ENCODE measurements at regions of chr4 and their contacts with region 1.

Region 1: DNA sequence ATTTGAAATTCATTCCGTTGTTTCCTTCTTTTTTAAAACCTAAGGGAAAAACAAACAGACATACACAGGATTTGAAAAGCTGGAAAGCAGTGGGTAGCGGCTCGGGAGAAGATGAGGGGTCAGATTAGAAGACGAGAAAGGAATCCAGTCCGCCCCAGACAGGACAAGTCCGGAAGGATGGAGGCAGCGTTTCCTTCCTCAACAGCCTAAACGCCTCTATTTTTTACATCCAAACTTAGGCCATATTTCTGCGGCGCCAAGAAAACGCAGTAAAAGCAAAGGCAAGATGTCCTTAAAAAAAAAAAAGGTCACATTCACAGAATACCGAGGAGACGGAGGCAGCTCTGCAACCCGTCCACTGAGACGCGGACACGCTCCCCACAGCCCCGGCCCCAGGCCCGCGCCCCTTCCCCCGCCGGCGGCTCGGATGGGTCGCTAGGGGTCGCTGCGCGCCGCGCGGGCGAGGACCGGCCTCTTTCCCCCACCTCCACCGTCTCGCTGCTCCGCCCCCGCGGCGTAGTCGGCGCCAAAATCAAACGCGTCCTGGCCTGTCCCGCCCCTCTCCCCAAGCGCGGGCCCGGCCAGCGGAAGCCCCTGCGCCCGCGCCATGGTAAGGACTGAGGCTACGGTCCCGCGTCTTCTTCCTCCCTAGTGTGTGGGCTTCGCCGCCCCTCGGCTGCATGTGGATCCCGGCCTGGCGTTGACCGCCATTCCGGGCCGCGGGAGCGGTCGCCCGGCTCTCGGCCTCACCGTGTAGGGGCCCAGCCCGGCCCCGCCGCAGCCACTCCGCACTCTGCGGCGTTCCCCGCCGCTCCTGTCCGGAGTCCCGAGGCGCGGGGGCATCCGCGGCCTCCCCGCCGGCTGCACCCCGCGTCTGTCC is at the start of gene MND1:
- DNase-seq: peak; percentile 77 to 93 (median 89)
- ATAC-seq: peak; percentile 93
- H3K4me3 ChIP-seq: peak within 1 kb of the TSS; percentile 49 to 66
- H3K4me3 Mint-ChIP-seq: peak within 1 kb of the TSS; percentile 87
- H3K27ac ChIP-seq: no peak within 1 kb of the TSS
- H3K27ac Mint-ChIP-seq: peak within 1 kb of the TSS; percentile 58
- H3K4me1 ChIP-seq: no peaks in the 10 kb centered on the region
- H3K4me1 Mint-ChIP-seq: peaks cover 6% of the 10 kb centered on the region
- H3K27me3 ChIP-seq: no peaks in the 10 kb centered on the region
- H3K27me3 Mint-ChIP-seq: no peaks in the 10 kb centered on the region
- CTCF ChIP-seq: peak; percentile 99
- total RNA-seq, gene MND1: not detected

Region 2: DNA sequence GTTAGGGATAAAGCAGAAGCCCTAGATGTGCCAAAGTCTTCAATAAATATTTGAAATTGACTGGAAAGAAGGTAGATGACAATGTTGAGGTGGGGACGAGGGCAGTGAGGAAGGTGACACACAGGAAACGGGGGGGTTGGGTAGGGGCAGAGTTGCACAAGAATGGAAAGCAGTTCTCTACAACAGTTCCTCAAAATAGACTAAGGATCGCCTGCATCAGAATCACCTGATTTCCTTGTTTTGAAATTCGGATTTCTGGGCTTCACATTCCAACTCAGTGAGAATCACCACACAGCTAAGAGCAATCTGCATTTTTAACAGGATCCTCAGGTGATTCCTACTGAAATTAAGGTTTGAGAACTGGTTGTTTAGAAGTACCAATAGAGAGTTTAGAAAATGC is 494.0 kb before region 1 on chr4:
- CTCF ChIA-PET with region 1: no interaction called
- POLR2A ChIA-PET with region 1: interaction called, 4 read pairs
- intact Hi-C with region 1: loop called in 1 of 2 experiments (anchors 5 kb)
- DNase-seq: peak in 7 of 9 experiments; percentile 18 to 57 (median 33)
- ATAC-seq: peak; percentile 69
- H3K4me3 ChIP-seq: no peak overlapping the region
- H3K4me3 Mint-ChIP-seq: no peak overlapping the region
- H3K27ac ChIP-seq: no peak overlapping the region
- H3K27ac Mint-ChIP-seq: no peak overlapping the region
- H3K4me1 ChIP-seq: peaks cover 4% of the 10 kb centered on the region
- H3K4me1 Mint-ChIP-seq: peaks cover 24% of the 10 kb centered on the region
- H3K27me3 ChIP-seq: no peaks in the 10 kb centered on the region
- H3K27me3 Mint-ChIP-seq: no peaks in the 10 kb centered on the region
- CTCF ChIP-seq: no peak

Region 3: GRCh38 chr4:153426207-153426885 is 82.0 kb after region 1 on chr4:
- CTCF ChIA-PET with region 1: interaction called, 18 read pairs
- POLR2A ChIA-PET with region 1: interaction called, 3 read pairs
- intact Hi-C with region 1: loop called in 1 of 2 experiments (anchors 5 kb)
- DNase-seq: peak in 4 of 9 experiments; percentile 9 to 78 (median 40)
- ATAC-seq: peak; percentile 78
- H3K4me3 ChIP-seq: peak overlapping the region in 1 of 2 experiments; percentile 33
- H3K4me3 Mint-ChIP-seq: peak overlapping the region; percentile 40
- H3K27ac ChIP-seq: peak overlapping the region; percentile 55 to 77
- H3K27ac Mint-ChIP-seq: peak overlapping the region; percentile 83
- H3K4me1 ChIP-seq: peaks cover 44% of the 10 kb centered on the region
- H3K4me1 Mint-ChIP-seq: peaks cover 53% of the 10 kb centered on the region
- H3K27me3 ChIP-seq: no peaks in the 10 kb centered on the region
- H3K27me3 Mint-ChIP-seq: no peaks in the 10 kb centered on the region
- CTCF ChIP-seq: no peak

Region 4: DNA sequence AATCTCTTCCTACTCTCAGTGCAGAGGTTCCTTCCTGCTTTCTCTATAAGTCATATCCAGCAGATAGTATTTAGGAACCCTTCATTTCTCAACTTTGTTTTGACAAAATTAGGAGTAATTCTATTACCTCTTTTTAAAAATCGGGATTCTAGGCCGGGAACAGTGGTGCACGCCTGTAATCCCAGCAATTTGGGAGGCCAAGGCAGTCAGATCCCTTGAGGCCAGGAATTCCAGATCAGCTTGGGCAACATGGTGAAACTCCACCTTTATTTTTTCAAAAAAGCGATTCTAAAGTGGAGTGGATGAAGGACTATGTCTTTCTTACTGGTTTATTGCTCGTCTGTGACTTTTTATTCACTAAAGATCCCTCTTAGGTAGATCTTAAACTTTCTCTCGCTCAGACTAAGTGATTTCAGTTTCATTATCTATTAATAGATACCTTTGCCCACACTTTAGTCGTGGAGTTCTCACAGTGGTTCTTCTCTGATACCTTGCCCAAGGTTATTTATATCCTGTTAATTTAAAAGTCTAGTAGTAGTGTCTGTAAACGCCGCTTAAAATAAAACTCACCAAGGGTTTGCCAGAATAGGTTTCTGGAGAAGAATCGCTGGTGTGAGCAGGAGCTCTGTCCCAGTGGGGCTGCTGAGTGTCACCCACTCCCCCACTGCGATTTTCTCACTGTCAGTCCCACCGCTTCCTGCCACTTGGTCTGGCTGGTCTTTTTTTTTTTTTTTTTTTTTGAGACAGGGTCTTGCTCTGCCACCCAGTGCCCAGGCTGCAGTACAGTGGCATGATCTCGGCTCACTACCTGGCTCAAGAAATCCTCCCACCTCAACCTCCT is 94.8 kb after region 1 on chr4:
- CTCF ChIA-PET with region 1: interaction called, 3 read pairs
- POLR2A ChIA-PET with region 1: no interaction called
- intact Hi-C with region 1: loop called in 1 of 2 experiments (anchors 2 kb)
- DNase-seq: peak in 7 of 9 experiments; percentile 18 to 75 (median 49)
- ATAC-seq: peak; percentile 74
- H3K4me3 ChIP-seq: peak overlapping the region; percentile 45 to 47
- H3K4me3 Mint-ChIP-seq: peak overlapping the region; percentile 80
- H3K27ac ChIP-seq: peak overlapping the region; percentile 38 to 89
- H3K27ac Mint-ChIP-seq: peak overlapping the region; percentile 88
- H3K4me1 ChIP-seq: peaks cover 31% of the 10 kb centered on the region
- H3K4me1 Mint-ChIP-seq: peaks cover 48% of the 10 kb centered on the region
- H3K27me3 ChIP-seq: no peaks in the 10 kb centered on the region
- H3K27me3 Mint-ChIP-seq: no peaks in the 10 kb centered on the region
- CTCF ChIP-seq: no peak

Region 5: GRCh38 chr4:153643406-153644383 is 299.3 kb after region 1 on chr4:
- CTCF ChIA-PET with region 1: interaction called, 16 read pairs
- POLR2A ChIA-PET with region 1: interaction called, 4 read pairs
- intact Hi-C with region 1: loop called (anchors 1 to 2 kb)
- DNase-seq: peak in 2 of 9 experiments; percentile 63 to 75
- ATAC-seq: peak; percentile 99
- H3K4me3 ChIP-seq: no peak overlapping the region
- H3K4me3 Mint-ChIP-seq: no peak overlapping the region
- H3K27ac ChIP-seq: no peak overlapping the region
- H3K27ac Mint-ChIP-seq: peak overlapping the region; percentile 49
- H3K4me1 ChIP-seq: no peaks in the 10 kb centered on the region
- H3K4me1 Mint-ChIP-seq: peaks cover 3% of the 10 kb centered on the region
- H3K27me3 ChIP-seq: no peaks in the 10 kb centered on the region
- H3K27me3 Mint-ChIP-seq: no peaks in the 10 kb centered on the region
- CTCF ChIP-seq: peak; percentile 62

Region 6: GRCh38 chr4:153750197-153750817 is 405.9 kb after region 1 on chr4:
- CTCF ChIA-PET with region 1: no interaction called
- POLR2A ChIA-PET with region 1: no interaction called
- intact Hi-C with region 1: loop called in 1 of 2 experiments (anchors 2 kb)
- DNase-seq: peak; percentile 21 to 70 (median 56)
- ATAC-seq: peak; percentile 64
- H3K4me3 ChIP-seq: no peak overlapping the region
- H3K4me3 Mint-ChIP-seq: no peak overlapping the region
- H3K27ac ChIP-seq: no peak overlapping the region
- H3K27ac Mint-ChIP-seq: no peak overlapping the region
- H3K4me1 ChIP-seq: peaks cover 10% of the 10 kb centered on the region
- H3K4me1 Mint-ChIP-seq: peaks cover 12% of the 10 kb centered on the region
- H3K27me3 ChIP-seq: no peaks in the 10 kb centered on the region
- H3K27me3 Mint-ChIP-seq: peaks cover 4% of the 10 kb centered on the region
- CTCF ChIP-seq: peak; percentile 76